ENCODE measurements at regions of chr20 and their contacts with region 1.

Region 1: DNA sequence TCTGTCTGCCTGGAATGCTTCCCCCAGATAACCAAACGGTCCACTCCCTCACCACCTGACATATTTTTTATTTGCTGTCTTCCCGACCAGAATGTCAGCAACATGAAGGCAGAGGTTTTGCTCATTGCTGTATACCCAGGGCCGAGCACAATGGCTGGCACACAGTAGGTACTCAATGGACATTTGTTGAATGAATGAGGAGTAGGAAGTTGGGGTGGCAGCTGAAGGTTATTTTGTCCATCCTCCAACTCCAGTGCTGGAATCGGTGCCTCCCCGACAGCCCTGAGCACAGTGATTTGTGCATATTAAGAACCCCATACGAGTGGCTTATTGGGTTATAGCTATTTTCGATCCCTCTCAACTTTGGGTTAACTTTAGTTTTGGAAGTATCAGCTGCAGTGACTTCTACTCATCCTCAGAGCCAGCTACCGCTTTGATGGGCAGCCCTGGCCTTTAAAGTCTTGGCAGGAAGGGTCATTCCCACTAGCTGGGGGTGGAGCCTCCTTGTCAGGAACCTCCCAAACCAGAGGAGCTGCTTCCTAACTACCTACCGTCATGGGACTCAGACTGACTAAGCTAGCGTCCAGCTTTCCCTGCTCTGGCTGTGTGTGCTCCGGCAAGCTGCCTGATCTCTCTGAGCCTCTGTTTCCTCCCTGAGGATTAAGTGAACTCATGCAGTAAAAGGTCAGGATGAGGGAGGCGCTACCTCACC is 10.2 kb downstream of the DUSP15 start:
- DNase-seq: peak; percentile 34
- H3K4me3 ChIP-seq: peak overlapping the region in 3 of 8 donors; percentile 53 to 79 (median 57)
- H3K27ac ChIP-seq: no peak overlapping the region
- H3K4me1 ChIP-seq: peaks cover 13 to 33% (median 22%) of the 10 kb centered on the region in 6 donors
- H3K27me3 ChIP-seq: peaks cover 0 to 35% (median 15%) of the 10 kb centered on the region in 7 donors
- CTCF ChIP-seq: no peak
- POLR2A ChIP-seq: no peak

Region 2: DNA sequence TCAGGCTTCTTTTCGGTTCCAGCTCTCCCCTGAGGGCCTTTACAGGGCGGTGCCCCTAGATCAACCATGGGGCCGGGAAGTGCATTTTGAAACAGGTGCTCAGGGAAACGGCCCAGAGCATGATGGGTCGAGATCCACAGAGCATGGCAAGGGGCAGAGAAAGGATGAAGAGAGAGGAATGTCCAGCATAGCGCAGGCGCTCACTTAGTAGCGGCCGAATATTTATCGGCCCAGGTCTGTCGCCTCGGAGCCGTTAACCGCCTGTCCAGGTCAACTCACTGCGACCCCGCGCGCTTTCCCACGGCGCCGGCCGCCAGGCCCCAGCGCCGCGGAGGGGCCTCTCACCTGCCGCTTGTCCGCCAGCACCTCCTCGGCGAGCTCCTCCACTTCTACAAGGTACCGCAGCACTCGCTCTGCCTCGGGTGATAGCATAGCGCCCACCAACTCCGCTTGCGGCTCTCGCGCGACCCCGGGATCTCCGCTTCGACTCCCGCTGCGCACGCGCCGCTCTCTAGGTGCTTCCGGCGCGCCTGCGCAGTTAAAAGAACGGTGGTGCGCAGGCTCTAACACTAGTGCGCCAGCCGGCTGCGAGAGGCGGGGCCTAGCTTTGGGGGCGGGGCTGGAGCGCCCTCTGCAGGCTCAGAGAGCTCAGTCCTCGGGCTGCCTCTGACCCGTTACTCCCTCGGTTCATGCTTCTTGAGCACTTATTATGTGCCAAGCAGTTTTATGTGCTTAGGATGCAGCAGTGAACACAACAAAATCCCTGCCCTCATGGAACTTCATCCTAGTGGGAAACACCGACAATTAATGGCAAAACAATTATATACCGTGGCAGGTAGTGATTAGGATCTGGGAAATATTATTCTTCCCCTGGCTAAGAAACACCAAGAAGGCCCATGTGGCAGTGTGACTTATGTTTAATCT is 91.6 kb after region 1 on chr20 and contains the start of gene PDRG1:
- intact Hi-C with region 1: loop called (anchors 10 kb)
- DNase-seq: peak; percentile 99
- H3K4me3 ChIP-seq: peak within 1 kb of the TSS; percentile 76 to 97 (median 88)
- H3K27ac ChIP-seq: peak within 1 kb of the TSS; percentile 72 to 92 (median 84)
- H3K4me1 ChIP-seq: peaks cover 11 to 33% (median 25%) of the 10 kb centered on the region in 6 donors
- H3K27me3 ChIP-seq: peaks cover 0 to 6% (median 0%) of the 10 kb centered on the region in 7 donors
- CTCF ChIP-seq: peak; percentile 87 to 99 (median 97)
- POLR2A ChIP-seq: no peak
- total RNA-seq, gene PDRG1: 8.2 to 13.9 (median 10.4) TPM

Region 3: DNA sequence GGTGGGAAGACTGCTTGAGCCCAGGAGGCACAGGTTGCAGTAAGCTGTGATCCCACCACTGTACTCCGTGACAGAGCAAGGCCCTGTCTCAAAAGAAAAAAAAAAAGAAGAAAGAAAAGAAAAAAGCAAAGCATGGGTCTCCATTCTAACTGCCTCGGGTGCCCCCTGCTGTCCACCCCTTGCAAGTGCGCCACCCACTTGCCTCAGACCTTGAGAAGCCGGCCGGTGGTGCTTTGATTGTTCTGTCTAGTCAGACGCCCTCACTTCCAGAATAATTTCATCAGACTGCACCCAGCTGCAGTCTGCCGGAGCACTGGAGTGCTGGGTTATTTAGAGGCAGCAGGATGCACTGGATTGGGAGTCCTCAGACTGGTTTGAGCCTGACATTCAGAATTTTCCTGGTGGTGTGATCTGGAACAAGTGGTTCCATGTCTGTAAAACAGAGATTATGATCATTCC is 231.8 kb after region 1 on chr20:
- intact Hi-C with region 1: loop called (anchors 10 kb)
- DNase-seq: peak; percentile 93
- H3K4me3 ChIP-seq: no peak overlapping the region
- H3K27ac ChIP-seq: peak overlapping the region in 1 of 8 donors; percentile 37
- H3K4me1 ChIP-seq: peaks cover 0 to 17% (median 8%) of the 10 kb centered on the region in 6 donors
- H3K27me3 ChIP-seq: no peaks in the 10 kb centered on the region
- CTCF ChIP-seq: peak; percentile 88 to 98 (median 95)
- POLR2A ChIP-seq: no peak

Region 4: GRCh38 chr20:32132911-32133549 is 272.9 kb after region 1 on chr20:
- intact Hi-C with region 1: no loop called
- DNase-seq: no peak
- H3K4me3 ChIP-seq: no peak overlapping the region
- H3K27ac ChIP-seq: no peak overlapping the region
- H3K4me1 ChIP-seq: no peaks in the 10 kb centered on the region
- H3K27me3 ChIP-seq: no peaks in the 10 kb centered on the region
- CTCF ChIP-seq: no peak
- POLR2A ChIP-seq: no peak

Measured in spleen (tissue), 13 donors.